Heart left ventricle (tissue), 16 donors: ENCODE measurements at regions of chr10 and their contacts with region 1.

Region 1: DNA sequence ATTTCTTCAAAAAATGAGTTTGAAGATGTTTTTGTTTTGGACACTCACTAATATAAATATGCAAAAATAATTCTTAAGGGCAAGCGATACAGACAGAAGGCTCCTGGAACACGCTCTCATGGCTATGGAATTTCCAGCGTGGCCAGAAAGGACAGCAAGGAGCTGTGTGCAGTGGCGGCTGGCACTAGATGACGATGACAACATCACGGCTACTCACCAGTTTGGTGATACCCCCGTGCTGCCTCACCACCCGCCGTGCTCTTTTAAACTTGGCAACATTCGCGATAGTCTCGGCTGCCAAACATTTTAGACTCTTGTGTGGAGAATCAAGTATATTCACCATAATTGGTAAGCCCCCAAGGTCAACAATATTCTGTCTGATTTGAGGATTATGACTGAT is 54.9 kb downstream of the ODAD2 start:
- DNase-seq: peak in 1 of 5 donors; percentile 27
- ATAC-seq: no peak
- H3K4me3 ChIP-seq: no peak overlapping the region
- H3K27ac ChIP-seq: no peak overlapping the region
- H3K4me1 ChIP-seq: no peaks in the 10 kb centered on the region
- H3K27me3 ChIP-seq: peaks cover 0 to 3% (median 0%) of the 10 kb centered on the region in 9 donors
- CTCF ChIP-seq: no peak
- POLR2A ChIP-seq: no peak

Region 2: DNA sequence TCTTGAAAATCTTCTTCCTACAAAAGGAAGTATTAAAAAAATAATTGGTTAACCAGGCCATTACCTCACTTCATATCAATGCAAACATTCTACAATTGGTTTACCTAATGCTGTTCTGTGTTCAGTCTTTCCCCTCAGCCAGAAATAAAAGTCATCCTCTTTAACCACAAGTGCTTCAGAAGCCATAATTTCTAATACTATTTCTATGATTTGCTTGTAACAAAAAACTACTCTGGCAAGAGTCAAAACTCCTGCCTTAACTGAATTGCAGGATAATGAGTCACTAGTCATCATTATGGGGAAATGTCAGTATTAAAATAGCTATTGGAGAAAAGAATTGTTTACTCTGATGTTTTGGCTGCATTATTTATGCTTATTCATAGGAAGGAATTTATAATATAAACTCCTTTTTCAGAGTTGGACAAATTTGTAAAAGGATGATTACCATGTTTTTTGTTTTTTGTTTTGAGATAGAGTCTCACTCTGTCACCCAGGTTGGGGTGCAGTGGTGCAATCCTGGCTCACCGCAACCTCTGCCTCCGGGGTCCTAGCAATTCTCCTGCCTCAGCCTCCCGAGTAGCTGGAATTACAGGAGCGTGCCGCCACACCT is 110.3 kb after region 1 on chr10:
- intact Hi-C with region 1: no loop called
- DNase-seq: no peak
- ATAC-seq: no peak
- H3K4me3 ChIP-seq: no peak overlapping the region
- H3K27ac ChIP-seq: peak overlapping the region in 1 of 12 donors; percentile 16
- H3K4me1 ChIP-seq: no peaks in the 10 kb centered on the region
- H3K27me3 ChIP-seq: no peaks in the 10 kb centered on the region
- CTCF ChIP-seq: no peak
- POLR2A ChIP-seq: no peak

Region 3: DNA sequence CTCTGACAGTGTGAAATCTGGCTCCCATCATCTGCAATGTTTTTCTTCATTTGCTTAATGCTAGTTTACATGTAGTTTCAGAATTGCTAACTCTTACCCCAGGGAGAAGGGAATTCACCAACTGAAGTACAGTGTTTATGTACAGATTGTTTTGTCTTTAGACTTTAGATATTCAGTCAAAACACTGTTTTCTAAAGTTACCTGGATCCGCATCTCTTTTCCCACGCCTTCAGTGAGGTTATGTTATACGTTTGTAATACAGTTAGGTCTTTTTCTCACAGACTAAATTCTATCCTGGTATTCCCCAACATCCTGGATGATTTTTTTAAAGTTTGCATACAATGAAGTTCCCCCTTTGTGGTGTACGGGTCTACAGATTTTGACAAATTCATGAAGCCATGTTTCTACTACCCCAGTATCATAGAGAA is 1341.6 kb after region 1 on chr10:
- intact Hi-C with region 1: loop called in 1 of 10 experiments (anchors 10 kb)
- DNase-seq: no peak
- ATAC-seq: no peak
- H3K4me3 ChIP-seq: no peak overlapping the region
- H3K27ac ChIP-seq: no peak overlapping the region
- H3K4me1 ChIP-seq: no peaks in the 10 kb centered on the region
- H3K27me3 ChIP-seq: no peaks in the 10 kb centered on the region
- CTCF ChIP-seq: no peak
- POLR2A ChIP-seq: no peak